ENCODE measurements at regions of chr19 and their contacts with region 1.

Region 1: GRCh38 chr19:28466107-28467045 is 746.6 kb downstream of the UQCRFS1 start:
- DNase-seq: peak in 2 of 3 donors; percentile 79 to 95
- ATAC-seq: peak; percentile 47
- H3K4me3 ChIP-seq: no peak overlapping the region
- H3K4me1 ChIP-seq: peaks cover 13% of the 10 kb centered on the region
- CTCF ChIP-seq: peak; percentile 71

Region 2: DNA sequence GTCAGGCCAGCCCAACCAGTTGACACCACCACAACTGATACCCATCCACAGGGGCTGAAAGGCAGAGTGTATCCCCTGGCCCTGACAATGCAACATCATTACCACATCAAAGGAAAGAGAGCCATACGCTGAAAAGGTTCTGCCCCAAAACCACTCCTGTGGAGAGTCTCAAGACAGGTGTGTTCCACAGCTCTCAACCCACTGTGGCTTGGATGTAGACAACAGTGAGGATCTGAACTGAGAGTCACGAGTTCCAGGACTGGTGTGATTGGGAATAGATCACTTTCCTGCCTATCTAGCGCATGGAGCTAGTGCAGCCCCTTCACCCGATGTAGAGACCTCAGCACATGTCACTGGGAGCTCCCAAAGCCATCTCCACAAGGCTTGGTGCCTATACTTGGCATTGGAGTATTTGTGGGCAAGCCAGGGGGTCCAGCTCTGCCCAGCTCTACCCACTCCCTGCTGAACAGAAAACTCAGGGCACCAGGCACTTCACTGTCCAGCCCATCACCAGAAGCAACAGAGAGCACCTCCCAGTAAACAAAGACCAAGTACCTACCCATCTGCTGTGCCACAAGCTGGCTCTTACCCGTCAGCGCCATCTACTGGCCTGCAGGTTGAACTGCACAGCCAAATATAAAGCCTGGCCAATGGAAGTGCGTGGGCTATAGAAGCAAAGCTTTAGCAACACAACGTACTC is 167.1 kb after region 1 on chr19:
- intact Hi-C with region 1: loop called in 1 of 2 experiments (anchors 2 kb)
- DNase-seq: peak in 2 of 3 donors; percentile 54 to 72
- ATAC-seq: peak; percentile 95
- H3K4me3 ChIP-seq: no peak overlapping the region
- H3K4me1 ChIP-seq: no peaks in the 10 kb centered on the region
- CTCF ChIP-seq: peak; percentile 87

Region 3: GRCh38 chr19:28705008-28705407 is 238.6 kb after region 1 on chr19:
- intact Hi-C with region 1: loop called in 1 of 2 experiments (anchors 5 kb)
- DNase-seq: no peak
- ATAC-seq: no peak
- H3K4me3 ChIP-seq: no peak overlapping the region
- H3K4me1 ChIP-seq: no peaks in the 10 kb centered on the region
- CTCF ChIP-seq: no peak

Measured in mucosa of descending colon (tissue), 3 donors.